T-cell (primary cell): ENCODE measurements at regions of chr5 and their contacts with region 1.

Region 1: GRCh38 chr5:37412515-37413277 is 33.6 kb downstream of the WDR70 start:
- DNase-seq: peak in 18 of 35 experiments; percentile 1 to 69 (median 10)
- ATAC-seq: peak in 2 of 4 experiments; percentile 42 to 46
- H3K4me3 ChIP-seq: no peak overlapping the region
- H3K4me3 Mint-ChIP-seq: no peak overlapping the region
- H3K27ac ChIP-seq: no peak overlapping the region
- H3K27ac Mint-ChIP-seq: no peak overlapping the region
- H3K4me1 ChIP-seq: no peaks in the 10 kb centered on the region
- H3K4me1 Mint-ChIP-seq: no peaks in the 10 kb centered on the region
- H3K27me3 ChIP-seq: no peaks in the 10 kb centered on the region
- H3K27me3 Mint-ChIP-seq: no peaks in the 10 kb centered on the region

Region 2: DNA sequence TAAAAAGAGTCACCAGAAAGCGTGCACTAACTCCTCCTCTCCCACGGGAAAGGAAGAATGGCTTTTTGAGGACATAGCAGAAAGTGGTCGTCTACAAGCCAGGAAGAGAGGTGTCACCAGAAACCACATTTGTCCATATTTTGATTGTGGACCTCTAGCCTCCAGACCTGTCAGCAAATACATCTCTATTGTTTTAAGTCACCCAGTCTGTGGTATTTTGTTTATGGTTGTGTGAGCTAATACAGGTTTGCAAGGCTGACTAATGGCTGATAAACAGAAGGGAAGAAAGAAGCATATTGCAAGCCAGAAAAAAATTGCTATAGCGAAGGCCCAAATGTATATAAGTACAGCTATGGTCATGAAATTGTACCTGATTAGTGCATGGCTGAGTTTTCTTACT is 12.2 kb before region 1 on chr5:
- CTCF ChIA-PET with region 1: interaction called, 4 to 13 read pairs
- POLR2A ChIA-PET with region 1: interaction called in 1 of 2 experiments, 16 read pairs
- DNase-seq: no peak
- ATAC-seq: no peak
- H3K4me3 ChIP-seq: no peak overlapping the region
- H3K4me3 Mint-ChIP-seq: no peak overlapping the region
- H3K27ac ChIP-seq: no peak overlapping the region
- H3K27ac Mint-ChIP-seq: no peak overlapping the region
- H3K4me1 ChIP-seq: no peaks in the 10 kb centered on the region
- H3K4me1 Mint-ChIP-seq: no peaks in the 10 kb centered on the region
- H3K27me3 ChIP-seq: no peaks in the 10 kb centered on the region
- H3K27me3 Mint-ChIP-seq: no peaks in the 10 kb centered on the region

Region 3: DNA sequence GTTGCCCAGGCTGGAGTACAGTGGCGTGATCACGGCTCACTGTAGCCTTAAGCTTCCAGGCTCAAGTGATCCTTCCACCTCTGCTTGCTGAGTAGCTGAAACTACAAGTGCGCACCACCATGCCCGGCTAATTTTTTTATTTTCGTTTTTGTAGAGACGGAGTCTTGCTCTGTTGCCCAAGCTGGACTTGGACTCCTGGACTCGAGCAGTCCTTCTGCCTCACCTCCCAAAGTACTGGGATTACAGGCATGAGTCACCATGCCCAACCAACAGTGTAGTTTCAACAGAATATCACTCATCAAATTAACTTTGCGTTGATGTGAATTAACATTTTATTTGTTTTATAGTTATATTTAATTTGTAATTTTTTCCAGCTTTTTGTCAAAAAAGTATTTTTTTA is 11.7 kb after region 1 on chr5:
- CTCF ChIA-PET with region 1: no interaction called
- POLR2A ChIA-PET with region 1: no interaction called
- DNase-seq: no peak
- ATAC-seq: no peak
- H3K4me3 ChIP-seq: no peak overlapping the region
- H3K4me3 Mint-ChIP-seq: no peak overlapping the region
- H3K27ac ChIP-seq: no peak overlapping the region
- H3K27ac Mint-ChIP-seq: no peak overlapping the region
- H3K4me1 ChIP-seq: no peaks in the 10 kb centered on the region
- H3K4me1 Mint-ChIP-seq: peaks cover under 1 to 9% (median 3%) of the 10 kb centered on the region in 3 donors
- H3K27me3 ChIP-seq: no peaks in the 10 kb centered on the region
- H3K27me3 Mint-ChIP-seq: no peaks in the 10 kb centered on the region

Region 4: DNA sequence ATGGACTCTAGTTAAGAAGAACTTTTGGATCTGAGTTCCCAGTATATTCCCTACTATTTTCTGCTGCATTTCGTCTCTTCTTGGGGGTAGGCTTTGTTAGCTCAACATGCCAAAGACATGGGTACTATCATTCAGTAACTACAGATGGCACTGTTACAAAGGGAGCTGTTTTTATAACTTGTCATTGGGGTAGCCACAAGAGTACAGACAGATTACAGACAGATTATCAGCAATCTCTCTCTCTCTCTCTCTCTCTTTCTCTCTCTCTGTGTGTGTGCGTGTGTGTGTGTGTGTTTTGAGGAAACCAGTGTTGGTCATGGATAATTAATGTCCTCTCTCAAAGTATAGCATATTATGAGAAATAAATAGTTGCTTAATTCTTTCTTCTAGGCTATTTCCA is 82.5 kb after region 1 on chr5:
- CTCF ChIA-PET with region 1: no interaction called
- POLR2A ChIA-PET with region 1: no interaction called
- DNase-seq: no peak
- ATAC-seq: no peak
- H3K4me3 ChIP-seq: no peak overlapping the region
- H3K4me3 Mint-ChIP-seq: no peak overlapping the region
- H3K27ac ChIP-seq: no peak overlapping the region
- H3K27ac Mint-ChIP-seq: no peak overlapping the region
- H3K4me1 ChIP-seq: no peaks in the 10 kb centered on the region
- H3K4me1 Mint-ChIP-seq: peaks cover 11 to 29% (median 26%) of the 10 kb centered on the region in 3 donors
- H3K27me3 ChIP-seq: no peaks in the 10 kb centered on the region
- H3K27me3 Mint-ChIP-seq: no peaks in the 10 kb centered on the region

Region 5: DNA sequence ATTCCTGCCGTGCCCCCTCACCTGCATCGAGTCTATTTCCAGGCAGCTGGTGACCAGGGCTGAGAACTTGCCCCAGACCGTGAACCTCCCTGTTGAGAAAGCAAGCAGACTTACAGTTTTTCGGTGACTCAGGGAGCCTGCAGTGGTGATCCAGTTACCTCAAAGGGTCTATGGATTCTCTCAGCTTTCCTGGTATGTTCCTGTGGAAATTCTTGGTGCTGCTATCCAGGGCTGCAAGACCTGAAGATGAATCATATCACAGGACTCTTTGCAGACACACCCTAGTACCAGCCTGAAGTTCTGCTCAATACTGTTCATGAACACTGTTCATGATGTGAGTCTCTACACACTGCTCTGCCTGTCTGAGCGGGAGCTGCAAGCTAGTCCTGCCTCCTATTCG is 121.2 kb after region 1 on chr5:
- CTCF ChIA-PET with region 1: no interaction called
- POLR2A ChIA-PET with region 1: no interaction called
- DNase-seq: no peak
- ATAC-seq: no peak
- H3K4me3 ChIP-seq: no peak overlapping the region
- H3K4me3 Mint-ChIP-seq: no peak overlapping the region
- H3K27ac ChIP-seq: no peak overlapping the region
- H3K27ac Mint-ChIP-seq: no peak overlapping the region
- H3K4me1 ChIP-seq: no peaks in the 10 kb centered on the region
- H3K4me1 Mint-ChIP-seq: peaks cover 0 to 4% (median 0%) of the 10 kb centered on the region in 3 donors
- H3K27me3 ChIP-seq: no peaks in the 10 kb centered on the region
- H3K27me3 Mint-ChIP-seq: no peaks in the 10 kb centered on the region